ENCODE measurements at regions of chr6 and their contacts with region 1.

Region 1: DNA sequence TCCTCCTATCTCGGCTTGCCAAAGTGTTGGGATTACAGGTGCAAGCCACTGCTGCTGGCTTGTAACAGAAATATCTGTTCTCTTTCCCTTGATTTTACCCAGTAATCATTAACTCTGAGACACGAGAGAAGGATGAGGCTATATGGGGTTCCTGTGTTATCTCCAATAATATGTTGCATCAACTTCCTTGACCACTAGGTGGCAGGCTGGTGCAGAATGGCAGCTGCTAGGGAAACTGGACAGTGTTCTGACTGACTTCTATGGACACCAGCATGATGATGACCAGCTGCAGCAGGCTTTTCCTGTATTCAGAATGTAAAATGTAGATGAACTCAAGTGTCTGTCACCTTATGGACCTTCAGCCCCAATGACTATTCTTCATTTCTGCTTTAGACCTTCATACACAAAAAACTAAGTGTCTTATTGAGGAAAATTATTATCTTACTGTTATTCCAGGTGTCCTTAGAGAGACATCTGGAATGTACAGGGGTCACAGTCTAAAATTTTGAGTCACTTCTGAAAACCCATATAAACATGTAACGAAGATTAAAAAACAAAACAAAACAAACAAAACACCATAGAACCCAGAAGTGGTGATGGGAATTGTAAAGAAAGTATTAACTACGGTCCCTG is 20.4 kb upstream of the CD109 start:
- DNase-seq: peak; percentile 79
- H3K4me3 Mint-ChIP-seq: no peak overlapping the region
- H3K27ac Mint-ChIP-seq: no peak overlapping the region
- H3K4me1 Mint-ChIP-seq: no peaks in the 10 kb centered on the region
- H3K27me3 Mint-ChIP-seq: peaks cover 49% of the 10 kb centered on the region

Region 2: GRCh38 chr6:73461537-73462350 is 213.8 kb before region 1 on chr6 and contains the start of gene MTO1:
- CTCF ChIA-PET with region 1: no interaction called
- DNase-seq: peak; percentile 91
- H3K4me3 Mint-ChIP-seq: peak within 1 kb of the TSS; percentile 98
- H3K27ac Mint-ChIP-seq: peak within 1 kb of the TSS; percentile 100
- H3K4me1 Mint-ChIP-seq: peaks cover 69% of the 10 kb centered on the region
- H3K27me3 Mint-ChIP-seq: no peaks in the 10 kb centered on the region

Region 3: GRCh38 chr6:73739096-73739495 is 63.5 kb after region 1 on chr6:
- CTCF ChIA-PET with region 1: interaction called, 126 read pairs
- DNase-seq: no peak
- H3K4me3 Mint-ChIP-seq: no peak overlapping the region
- H3K27ac Mint-ChIP-seq: no peak overlapping the region
- H3K4me1 Mint-ChIP-seq: no peaks in the 10 kb centered on the region
- H3K27me3 Mint-ChIP-seq: no peaks in the 10 kb centered on the region